ENCODE measurements at regions of chr11 and their contacts with region 1.

Region 1: GRCh38 chr11:95512682-95513081 is 276.9 kb downstream of the FAM76B start:
- DNase-seq: peak; percentile 90
- H3K4me3 ChIP-seq: no peak overlapping the region
- H3K27ac ChIP-seq: peak overlapping the region; percentile 65 to 78 (median 77)
- H3K4me1 ChIP-seq: peaks cover 4 to 29% (median 19%) of the 10 kb centered on the region in 4 donors
- H3K27me3 ChIP-seq: no peaks in the 10 kb centered on the region
- CTCF ChIP-seq: no peak
- EP300 ChIP-seq: no peak
- POLR2A ChIP-seq: no peak

Region 2: GRCh38 chr11:95231127-95231880 is 281.4 kb before region 1 on chr11 and contains the start of gene SESN3:
- intact Hi-C with region 1: loop called (anchors 10 kb)
- DNase-seq: peak; percentile 99
- H3K4me3 ChIP-seq: peak within 1 kb of the TSS; percentile 82 to 93 (median 88)
- H3K27ac ChIP-seq: peak within 1 kb of the TSS; percentile 85 to 92 (median 88)
- H3K4me1 ChIP-seq: peaks cover 14 to 37% (median 34%) of the 10 kb centered on the region in 4 donors
- H3K27me3 ChIP-seq: no peaks in the 10 kb centered on the region
- CTCF ChIP-seq: peak; percentile 10 to 32 (median 18)
- EP300 ChIP-seq: no peak
- POLR2A ChIP-seq: peak; percentile 58
- total RNA-seq, gene SESN3: 18.1 to 22.7 (median 21.4) TPM

Region 3: GRCh38 chr11:95337175-95337957 is 175.3 kb before region 1 on chr11:
- intact Hi-C with region 1: loop called (anchors 10 kb)
- DNase-seq: peak; percentile 92
- H3K4me3 ChIP-seq: peak overlapping the region; percentile 13 to 32 (median 25)
- H3K27ac ChIP-seq: peak overlapping the region; percentile 82 to 88 (median 86)
- H3K4me1 ChIP-seq: peaks cover 33 to 52% (median 43%) of the 10 kb centered on the region in 4 donors
- H3K27me3 ChIP-seq: no peaks in the 10 kb centered on the region
- CTCF ChIP-seq: no peak
- EP300 ChIP-seq: no peak
- POLR2A ChIP-seq: no peak

Region 4: GRCh38 chr11:95705485-95706124 is 192.9 kb after region 1 on chr11:
- intact Hi-C with region 1: loop called (anchors 5 kb)
- DNase-seq: peak; percentile 95
- H3K4me3 ChIP-seq: no peak overlapping the region
- H3K27ac ChIP-seq: peak overlapping the region; percentile 67 to 79 (median 68)
- H3K4me1 ChIP-seq: peaks cover 12 to 57% (median 53%) of the 10 kb centered on the region in 4 donors
- H3K27me3 ChIP-seq: no peaks in the 10 kb centered on the region
- CTCF ChIP-seq: peak; percentile 90 to 93 (median 91)
- EP300 ChIP-seq: no peak
- POLR2A ChIP-seq: no peak

Measured in esophagus muscularis mucosa (tissue), 4 donors.